HEK293T (cell line): ENCODE measurements at regions of chr17 and their contacts with region 1.

Region 1: DNA sequence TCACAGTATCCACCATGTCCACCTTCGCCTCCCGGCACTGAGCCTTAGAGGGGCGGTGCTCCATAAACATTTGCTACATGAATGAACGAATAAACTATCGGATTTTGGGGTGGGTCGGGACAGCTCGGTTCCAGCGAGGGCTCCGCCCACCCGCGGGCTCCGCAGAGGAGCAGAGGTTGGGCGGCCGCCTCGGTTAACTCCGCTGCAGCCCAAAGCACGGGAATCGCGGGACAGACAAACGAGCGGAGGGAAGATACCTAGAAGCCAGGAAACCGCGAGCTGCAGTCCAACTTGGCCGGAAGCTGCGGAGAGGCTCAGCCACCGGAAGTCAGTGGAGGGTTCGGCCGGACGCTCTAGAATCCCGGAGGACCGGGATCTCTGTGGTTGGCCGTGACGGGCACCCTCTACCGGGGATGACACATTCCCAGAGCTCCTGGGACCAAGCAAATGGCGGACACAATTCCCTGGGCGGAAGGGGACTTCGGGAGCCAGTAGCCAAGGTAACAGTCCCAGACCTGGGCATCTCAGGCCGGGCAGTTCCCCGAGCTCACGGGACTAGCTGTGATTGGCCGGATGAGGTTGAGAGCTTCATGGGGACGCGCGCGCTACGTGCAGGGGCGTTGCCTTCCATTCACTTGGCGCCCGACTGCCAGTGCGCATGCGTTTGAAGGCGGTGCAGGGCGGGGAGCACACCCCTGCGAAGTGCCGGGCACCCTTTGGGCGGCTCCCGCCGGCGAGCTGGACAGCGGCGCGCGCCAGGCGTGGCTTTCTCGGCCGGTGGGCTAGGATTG is 501 bp upstream of the MAPK7 start:
- DNase-seq: peak; percentile 99

Region 2: GRCh38 chr17:19313748-19314543 is 63.9 kb before region 1 on chr17:
- CTCF ChIA-PET with region 1: no interaction called
- POLR2A ChIA-PET with region 1: no interaction called
- DNase-seq: no peak

Region 3: GRCh38 chr17:19362277-19363113 is 15.3 kb before region 1 on chr17 and contains the start of gene B9D1:
- CTCF ChIA-PET with region 1: interaction called, 22 read pairs
- POLR2A ChIA-PET with region 1: interaction called, 41 read pairs
- DNase-seq: peak; percentile 97

Region 4: DNA sequence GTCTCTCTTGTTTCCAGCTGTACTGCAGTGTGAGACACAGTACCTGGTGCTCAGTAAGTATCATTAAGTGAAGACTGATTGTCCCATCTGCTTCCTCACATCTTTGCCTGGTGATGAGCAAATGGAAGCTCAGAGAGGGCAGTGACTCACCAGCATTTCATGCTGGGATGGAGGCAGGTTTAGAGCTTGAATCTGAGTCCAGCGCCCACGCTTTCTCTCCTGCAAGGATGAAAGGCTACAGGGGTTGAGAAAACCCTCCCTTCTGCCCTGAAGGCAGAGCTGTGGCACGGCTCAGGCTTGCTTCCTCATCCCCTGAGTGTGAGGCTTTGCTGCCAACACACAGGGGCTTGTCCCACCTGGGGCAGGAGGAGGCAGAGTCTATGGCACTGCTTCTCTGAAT is 31.7 kb after region 1 on chr17:
- CTCF ChIA-PET with region 1: no interaction called
- POLR2A ChIA-PET with region 1: interaction called, 15 read pairs
- DNase-seq: no peak

Region 5: GRCh38 chr17:19433727-19434340 is 56.0 kb after region 1 on chr17:
- CTCF ChIA-PET with region 1: interaction called, 8 read pairs
- POLR2A ChIA-PET with region 1: interaction called, 24 read pairs
- DNase-seq: no peak

Region 6: DNA sequence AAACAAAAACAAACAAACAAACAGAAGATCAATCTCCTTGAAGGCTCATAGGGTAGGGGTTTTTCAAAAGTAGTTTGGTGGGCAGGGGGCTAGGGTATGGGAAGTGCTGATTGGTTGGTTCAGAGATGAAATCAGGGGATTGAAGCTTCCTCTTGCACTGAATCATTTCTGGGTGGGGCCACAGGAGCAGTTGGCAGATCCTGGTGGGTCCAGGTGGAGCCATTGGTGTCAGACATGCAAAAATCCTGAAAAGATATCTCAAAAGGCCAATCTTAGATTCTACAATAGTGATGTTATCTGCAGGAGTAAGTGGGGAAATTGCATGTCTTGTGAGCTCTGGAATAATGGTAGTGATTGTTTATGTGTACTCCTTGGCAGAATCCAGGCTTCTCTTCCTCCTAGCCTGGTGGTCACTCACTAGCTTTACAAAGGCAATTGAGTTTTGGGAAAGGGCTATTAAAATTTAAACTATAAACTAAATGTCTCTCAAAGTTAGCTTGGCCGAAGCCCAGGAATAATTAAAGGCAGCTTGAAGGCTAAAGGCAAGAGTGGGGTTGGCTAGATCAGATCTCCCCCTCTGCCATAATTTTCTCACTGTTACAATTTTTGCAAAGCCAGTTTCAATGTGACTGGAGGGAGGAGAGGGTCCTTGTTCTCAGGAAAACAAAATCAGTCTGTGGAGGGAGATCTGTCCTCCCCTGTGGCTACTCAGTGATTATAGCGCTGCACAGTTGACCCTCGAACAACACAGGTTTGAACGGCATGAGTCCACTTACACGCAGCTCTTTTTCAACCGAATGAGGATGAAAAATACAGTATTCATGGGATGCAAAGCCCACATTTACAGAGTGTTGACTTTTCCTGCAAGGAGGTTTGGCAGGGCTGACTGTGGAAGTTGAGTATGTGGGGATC is 78.5 kb after region 1 on chr17:
- CTCF ChIA-PET with region 1: no interaction called
- POLR2A ChIA-PET with region 1: interaction called, 10 read pairs
- DNase-seq: no peak